Left cardiac atrium (tissue), 4 donors: ENCODE measurements at regions of chr13 and their contacts with region 1.

Region 1: GRCh38 chr13:35630551-35631275 is 154.2 kb upstream of the MAB21L1 start:
- DNase-seq: no peak
- ATAC-seq: peak; percentile 41 to 73

Region 2: GRCh38 chr13:35512271-35512920 is 118.3 kb before region 1 on chr13:
- intact Hi-C with region 1: no loop called
- DNase-seq: no peak
- ATAC-seq: peak; percentile 50 to 86

Region 3: GRCh38 chr13:35573639-35574038 is 57.1 kb before region 1 on chr13:
- intact Hi-C with region 1: no loop called
- DNase-seq: no peak
- ATAC-seq: no peak

Region 4: GRCh38 chr13:35760735-35761281 is 130.1 kb after region 1 on chr13:
- intact Hi-C with region 1: no loop called
- DNase-seq: no peak
- ATAC-seq: no peak

Region 5: DNA sequence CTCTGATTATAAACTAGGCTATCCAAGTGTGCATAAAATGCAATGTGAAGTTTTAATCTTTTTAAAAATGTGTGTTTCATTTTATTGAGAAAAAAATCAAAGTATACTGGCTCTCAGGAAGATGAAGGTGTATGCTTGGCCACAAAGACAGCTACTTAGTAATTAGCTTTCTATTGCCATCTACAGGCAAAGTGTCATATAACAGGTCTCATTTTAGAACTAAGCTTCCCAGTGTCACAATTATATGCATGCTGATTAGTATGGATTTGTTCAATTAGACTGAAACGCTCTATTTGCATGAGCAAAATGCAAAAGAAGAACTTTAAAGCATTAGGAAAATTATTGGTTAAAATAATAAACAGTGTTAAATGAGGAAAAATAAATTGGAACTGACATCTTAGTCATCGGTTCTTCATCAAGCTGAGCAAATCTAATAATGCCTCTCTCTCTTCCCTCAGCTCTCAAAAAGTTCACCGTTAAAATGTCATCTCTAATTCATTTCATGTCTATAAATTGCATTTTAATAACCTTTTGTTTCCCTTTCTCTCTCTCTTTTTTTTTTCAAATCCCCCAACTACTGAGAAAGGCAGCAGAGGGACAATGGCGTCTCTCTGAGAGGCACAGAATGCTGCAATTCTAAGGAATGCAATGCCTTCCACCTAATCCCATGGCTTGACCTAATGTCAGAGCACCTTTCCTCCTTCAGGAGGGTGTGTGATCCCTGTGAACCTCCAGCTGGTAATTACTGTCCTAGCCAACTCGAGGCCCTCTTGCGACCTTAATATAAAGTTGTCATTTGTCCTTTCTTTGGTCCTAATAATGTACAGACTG is 158.8 kb after region 1 on chr13:
- intact Hi-C with region 1: loop called in 1 of 2 experiments (anchors 10 kb)
- DNase-seq: no peak
- ATAC-seq: peak in 1 of 2 donors; percentile 41